ENCODE measurements at regions of chr2 and their contacts with region 1.

Region 1: DNA sequence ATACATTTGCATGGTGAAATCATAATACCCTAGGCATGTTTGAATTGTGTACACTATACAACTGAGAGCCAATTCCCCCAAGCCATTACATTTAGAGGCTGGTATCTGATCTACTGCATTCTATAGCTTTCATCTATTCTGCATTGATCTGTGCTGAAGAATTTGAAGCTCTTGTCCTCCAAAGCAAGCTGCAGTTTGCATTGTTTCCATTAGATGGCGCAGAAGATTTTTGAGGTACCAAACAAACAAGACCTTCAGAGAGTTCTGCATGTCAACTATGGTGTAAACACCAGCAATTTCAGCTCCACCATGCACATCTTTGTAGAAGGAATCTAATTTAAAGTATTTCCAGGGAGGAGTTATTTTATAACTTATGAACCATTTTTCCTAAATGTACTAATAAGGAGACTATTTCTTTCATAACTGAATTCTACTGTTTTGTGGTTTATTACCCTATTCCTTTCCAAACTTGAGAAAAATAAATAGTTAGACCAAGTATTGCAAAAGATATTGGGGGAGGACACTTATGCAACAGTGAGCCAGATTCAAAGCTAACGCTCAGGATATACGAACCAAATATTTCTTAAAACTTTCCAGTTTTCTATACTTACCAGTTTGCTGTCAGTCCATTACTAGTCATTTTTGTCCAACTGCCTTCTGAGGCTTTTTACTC is 761.8 kb upstream of the ACVR2A start:
- DNase-seq: peak; percentile 54
- ATAC-seq: peak; percentile 91
- H3K4me3 ChIP-seq: no peak overlapping the region
- H3K27ac ChIP-seq: no peak overlapping the region
- H3K4me1 ChIP-seq: no peaks in the 10 kb centered on the region
- H3K27me3 ChIP-seq: no peaks in the 10 kb centered on the region
- CTCF ChIP-seq: peak; percentile 86 to 94 (median 87); a peak in 5 of 6 replicates
- EP300 ChIP-seq: no peak
- POLR2A ChIP-seq: no peak
- RAD21 ChIP-seq: peak; percentile 95

Region 2: DNA sequence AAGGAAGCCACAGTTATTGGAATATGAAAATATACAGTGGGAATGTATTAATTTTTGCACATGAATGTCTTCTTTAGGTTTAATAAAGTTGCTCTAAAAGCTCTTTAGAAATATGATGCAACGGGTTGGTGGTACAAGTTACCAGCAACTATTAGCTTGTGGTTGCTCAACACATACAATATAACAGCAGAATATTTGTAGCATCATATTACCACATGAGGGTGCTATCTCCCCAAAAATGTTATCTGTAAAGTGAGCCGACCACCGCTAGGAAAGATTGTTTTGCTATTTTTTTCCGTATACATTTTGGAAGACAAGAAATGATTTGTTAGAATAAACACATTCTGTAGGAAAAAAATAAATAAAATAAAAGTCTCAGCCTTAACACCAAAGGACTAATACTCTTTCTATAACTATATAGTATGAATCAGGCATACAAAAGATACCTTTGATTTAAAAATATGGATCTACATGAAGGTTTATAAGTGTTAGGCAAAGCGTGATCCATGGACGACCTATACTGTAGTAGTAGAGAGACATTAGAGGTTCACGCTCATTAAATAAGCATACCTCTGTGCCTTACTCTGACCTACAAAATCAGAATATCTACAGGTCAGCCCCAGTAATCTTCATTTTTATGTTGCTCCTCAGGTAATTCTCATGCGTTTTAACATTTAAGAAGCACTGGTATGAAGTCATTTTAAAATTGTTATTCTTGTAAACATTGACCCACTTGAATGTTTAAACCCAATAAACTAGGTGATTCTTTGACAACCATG is 348.8 kb before region 1 on chr2:
- CTCF ChIA-PET with region 1: interaction called, 6 read pairs
- POLR2A ChIA-PET with region 1: no interaction called
- RAD21 ChIA-PET with region 1: interaction called, 10 read pairs
- SMC1A ChIA-PET with region 1: interaction called, 7 read pairs
- in situ Hi-C with region 1: no loop called
- intact Hi-C with region 1: loop called (anchors 2 kb)
- DNase-seq: peak; percentile 5
- ATAC-seq: peak; percentile 95
- H3K4me3 ChIP-seq: no peak overlapping the region
- H3K27ac ChIP-seq: no peak overlapping the region
- H3K4me1 ChIP-seq: no peaks in the 10 kb centered on the region
- H3K27me3 ChIP-seq: no peaks in the 10 kb centered on the region
- CTCF ChIP-seq: peak; percentile 40 to 57 (median 40); a peak in 5 of 6 replicates
- EP300 ChIP-seq: no peak
- POLR2A ChIP-seq: no peak
- RAD21 ChIP-seq: peak; percentile 50

Region 3: DNA sequence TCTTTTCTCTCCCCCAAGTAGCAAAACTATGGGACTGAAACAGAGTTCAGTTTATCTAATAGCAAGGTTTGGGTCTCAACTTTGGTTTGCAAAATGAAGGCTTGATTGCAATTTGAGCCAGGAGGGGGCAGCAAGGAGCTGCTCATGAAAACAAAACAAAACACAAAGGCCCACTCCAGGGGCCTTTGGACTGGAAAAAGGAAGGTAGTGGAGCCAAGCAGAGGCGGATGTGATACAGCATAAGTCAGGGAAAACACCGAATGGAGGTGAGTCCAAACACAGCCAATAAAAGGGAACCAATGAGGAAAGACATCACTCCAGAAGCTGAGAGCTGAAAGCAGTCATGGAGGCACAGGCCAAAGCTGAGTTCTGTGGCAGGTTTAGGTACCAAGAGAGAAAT is 37.9 kb before region 1 on chr2:
- CTCF ChIA-PET with region 1: interaction called, 42 read pairs
- POLR2A ChIA-PET with region 1: no interaction called
- RAD21 ChIA-PET with region 1: interaction called, 16 read pairs
- SMC1A ChIA-PET with region 1: interaction called, 22 read pairs
- in situ Hi-C with region 1: no loop called
- intact Hi-C with region 1: no loop called
- DNase-seq: peak; percentile 15
- ATAC-seq: peak; percentile 79
- H3K4me3 ChIP-seq: no peak overlapping the region
- H3K27ac ChIP-seq: no peak overlapping the region
- H3K4me1 ChIP-seq: no peaks in the 10 kb centered on the region
- H3K27me3 ChIP-seq: no peaks in the 10 kb centered on the region
- CTCF ChIP-seq: peak; percentile 54 to 69 (median 59)
- EP300 ChIP-seq: no peak
- POLR2A ChIP-seq: no peak
- RAD21 ChIP-seq: peak; percentile 88

Region 4: DNA sequence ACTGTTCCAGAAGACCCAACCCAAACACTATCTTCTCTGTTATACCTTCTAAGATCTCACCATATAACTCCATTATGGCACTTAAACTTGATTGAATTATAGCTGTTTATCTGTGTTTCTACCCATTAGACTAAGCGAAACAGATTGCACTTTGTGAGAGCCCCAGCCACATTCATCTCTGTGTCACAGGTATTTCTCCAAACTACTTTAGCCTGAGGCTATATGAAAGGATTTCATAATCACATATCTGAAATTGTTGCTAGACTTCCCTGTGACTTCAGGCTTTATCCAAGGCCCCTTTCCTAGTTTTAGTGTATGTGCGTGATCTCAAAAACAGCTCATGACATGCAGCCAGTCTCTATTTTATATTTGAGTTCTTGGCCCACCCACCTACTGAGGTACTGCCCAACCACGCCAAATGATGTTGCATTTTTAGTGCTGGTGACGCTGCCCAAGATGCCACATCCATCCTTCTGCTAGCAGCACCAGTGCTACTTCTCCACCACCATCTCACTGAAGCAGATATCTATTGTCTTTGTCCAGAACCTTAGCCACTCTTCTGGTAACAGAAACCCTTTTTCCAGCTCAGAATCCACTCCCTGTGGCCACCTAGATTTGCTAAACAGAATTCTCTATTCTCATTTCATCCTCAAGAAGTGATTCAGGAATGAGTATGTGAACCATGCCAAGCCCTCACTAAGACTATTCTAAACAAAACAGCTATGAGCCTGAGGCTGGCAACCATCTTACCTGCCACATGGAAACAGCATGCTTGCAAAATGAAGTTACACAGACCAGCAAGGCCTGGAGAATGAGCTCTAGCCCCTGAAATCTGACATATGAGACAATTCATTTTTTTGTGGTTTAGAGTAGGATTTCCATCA is 17.1 kb after region 1 on chr2:
- CTCF ChIA-PET with region 1: interaction called, 12 read pairs
- POLR2A ChIA-PET with region 1: no interaction called
- RAD21 ChIA-PET with region 1: interaction called, 4 read pairs
- SMC1A ChIA-PET with region 1: interaction called, 5 read pairs
- in situ Hi-C with region 1: no loop called
- intact Hi-C with region 1: no loop called
- DNase-seq: no peak
- ATAC-seq: no peak
- H3K4me3 ChIP-seq: no peak overlapping the region
- H3K27ac ChIP-seq: no peak overlapping the region
- H3K4me1 ChIP-seq: no peaks in the 10 kb centered on the region
- H3K27me3 ChIP-seq: no peaks in the 10 kb centered on the region
- CTCF ChIP-seq: no peak
- EP300 ChIP-seq: no peak
- POLR2A ChIP-seq: no peak
- RAD21 ChIP-seq: no peak

Region 5: DNA sequence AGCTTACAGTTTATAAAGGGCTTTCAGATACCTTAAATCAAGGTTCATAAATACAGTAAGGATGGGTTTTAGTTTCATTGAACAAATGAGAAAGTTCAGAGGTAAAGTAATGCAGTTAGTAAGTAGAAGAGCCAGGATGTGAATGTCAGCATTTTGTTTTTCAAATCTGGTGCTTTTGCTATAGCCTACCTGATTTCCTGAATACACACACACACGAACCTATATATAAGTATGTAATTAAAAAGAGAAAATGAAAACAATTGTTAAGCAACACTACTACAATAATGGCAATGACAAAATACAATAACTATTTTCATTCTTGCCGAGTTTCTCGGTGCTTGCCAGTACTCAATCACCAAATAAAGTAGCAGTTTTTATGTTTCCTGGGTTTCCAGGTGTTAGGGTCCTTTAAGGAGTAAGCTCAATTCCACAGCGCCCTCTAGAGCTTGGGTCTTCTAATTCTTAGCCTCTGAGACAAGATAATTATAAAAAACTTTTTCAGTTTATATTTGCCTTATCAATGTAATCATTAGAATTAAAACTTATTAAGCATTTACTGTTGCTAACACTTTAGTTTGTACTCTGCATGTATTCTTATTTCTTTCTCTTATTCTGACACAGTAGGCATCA is 248.9 kb after region 1 on chr2:
- CTCF ChIA-PET with region 1: interaction called, 169 read pairs
- POLR2A ChIA-PET with region 1: interaction called, 7 read pairs
- RAD21 ChIA-PET with region 1: interaction called, 67 read pairs
- SMC1A ChIA-PET with region 1: interaction called, 104 read pairs
- in situ Hi-C with region 1: loop called (anchors 5 kb)
- intact Hi-C with region 1: loop called (anchors 1 kb)
- DNase-seq: no peak
- ATAC-seq: peak; percentile 82
- H3K4me3 ChIP-seq: no peak overlapping the region
- H3K27ac ChIP-seq: no peak overlapping the region
- H3K4me1 ChIP-seq: peaks cover 4% of the 10 kb centered on the region; the same call in 1 of the 2 replicates
- H3K27me3 ChIP-seq: no peaks in the 10 kb centered on the region
- CTCF ChIP-seq: peak; percentile 40 to 61 (median 58); a peak in 5 of 6 replicates
- EP300 ChIP-seq: no peak
- POLR2A ChIP-seq: no peak
- RAD21 ChIP-seq: peak; percentile 91

Region 6: DNA sequence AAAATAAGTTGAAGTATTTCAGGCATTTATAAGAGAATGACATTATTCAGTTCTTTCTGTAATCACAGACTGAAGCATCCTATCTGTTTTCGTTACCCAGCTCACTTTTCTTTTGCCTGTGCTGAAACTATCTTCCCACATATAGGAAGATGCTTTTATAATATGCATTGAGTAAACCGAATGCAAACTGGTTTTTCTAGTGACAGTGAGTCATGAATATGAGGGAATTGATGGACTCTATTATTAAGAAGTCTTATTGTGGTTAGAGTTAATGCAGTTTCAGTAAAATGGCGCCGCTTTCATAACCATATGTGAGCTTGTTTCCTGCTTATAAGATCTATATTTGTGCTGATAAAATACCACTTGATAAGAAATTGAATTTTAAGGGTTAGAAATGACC is 821.1 kb after region 1 on chr2:
- CTCF ChIA-PET with region 1: interaction called, 140 read pairs
- POLR2A ChIA-PET with region 1: no interaction called
- RAD21 ChIA-PET with region 1: interaction called, 3 read pairs
- SMC1A ChIA-PET with region 1: interaction called, 87 read pairs
- in situ Hi-C with region 1: no loop called
- intact Hi-C with region 1: no loop called
- DNase-seq: no peak
- ATAC-seq: no peak
- H3K4me3 ChIP-seq: no peak overlapping the region
- H3K27ac ChIP-seq: no peak overlapping the region
- H3K4me1 ChIP-seq: no peaks in the 10 kb centered on the region
- H3K27me3 ChIP-seq: no peaks in the 10 kb centered on the region
- CTCF ChIP-seq: no peak
- EP300 ChIP-seq: no peak
- POLR2A ChIP-seq: no peak
- RAD21 ChIP-seq: no peak

Measured in GM12878 (cell line).